ENCODE measurements at regions of chrX and their contacts with region 1.

Region 1: DNA sequence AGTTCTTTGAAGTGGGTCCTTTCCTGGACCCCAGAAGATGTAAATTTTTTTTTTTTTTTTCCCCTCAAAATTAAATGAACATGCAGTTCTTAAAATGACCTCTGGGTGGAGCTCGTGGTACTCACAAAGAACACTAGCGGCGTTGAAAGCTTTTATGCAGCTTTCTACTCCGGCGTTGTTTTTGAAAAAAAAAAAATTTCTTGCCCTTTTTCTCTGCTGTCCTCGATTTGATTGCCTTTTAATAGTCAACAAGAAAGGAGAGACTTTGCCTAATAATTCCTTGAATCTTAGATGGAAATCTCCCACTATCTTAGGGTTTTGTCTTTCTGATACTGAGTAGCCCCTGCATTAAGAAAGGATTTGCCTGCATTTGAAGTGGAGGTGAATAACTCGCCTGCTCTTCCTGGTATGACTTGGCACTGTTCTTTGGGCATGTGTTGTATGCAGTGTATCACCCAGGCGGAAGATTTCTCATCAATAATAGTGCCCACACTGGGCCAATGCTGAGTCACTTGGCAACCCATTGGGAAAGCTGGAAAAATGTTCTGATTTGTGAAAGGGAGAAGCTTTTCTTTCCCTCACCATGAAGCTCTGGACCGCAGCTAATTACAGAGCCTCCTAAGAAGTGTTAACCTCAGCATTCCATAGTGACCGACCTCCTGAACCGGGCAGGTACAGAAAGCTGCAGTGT is 104.0 kb downstream of the PHEX start:
- DNase-seq: peak; percentile 24
- ATAC-seq: peak; percentile 58
- H3K4me3 Mint-ChIP-seq: no peak overlapping the region
- H3K27ac Mint-ChIP-seq: peak overlapping the region; percentile 36
- H3K4me1 Mint-ChIP-seq: peaks cover 15% of the 10 kb centered on the region
- H3K27me3 Mint-ChIP-seq: no peaks in the 10 kb centered on the region
- CTCF ChIP-seq: peak; percentile 65

Region 2: DNA sequence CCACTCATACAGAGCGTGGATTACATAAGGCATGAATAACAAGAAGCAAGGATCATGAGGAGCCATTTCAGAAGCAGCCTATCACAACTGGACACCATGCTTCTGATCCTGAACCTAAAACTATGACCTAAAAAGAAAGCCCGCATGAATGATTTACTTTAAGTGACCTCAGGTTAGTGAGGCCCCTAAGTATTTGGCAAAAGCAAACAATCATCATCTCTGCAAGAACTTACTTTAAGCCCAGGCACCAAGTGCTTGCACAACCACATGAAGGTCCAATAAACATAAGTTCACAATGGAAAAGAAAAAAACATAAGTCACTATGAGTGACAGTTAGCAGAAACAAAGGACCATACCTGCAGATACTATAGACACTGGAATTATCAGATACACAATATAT is 304.6 kb before region 1 on chrX:
- CTCF ChIA-PET with region 1: no interaction called
- POLR2A ChIA-PET with region 1: no interaction called
- intact Hi-C with region 1: no loop called
- DNase-seq: no peak
- ATAC-seq: no peak
- H3K4me3 Mint-ChIP-seq: no peak overlapping the region
- H3K27ac Mint-ChIP-seq: no peak overlapping the region
- H3K4me1 Mint-ChIP-seq: no peaks in the 10 kb centered on the region
- H3K27me3 Mint-ChIP-seq: no peaks in the 10 kb centered on the region
- CTCF ChIP-seq: no peak

Region 3: GRCh38 chrX:21993265-21993664 is 142.9 kb before region 1 on chrX:
- CTCF ChIA-PET with region 1: no interaction called
- POLR2A ChIA-PET with region 1: no interaction called
- intact Hi-C with region 1: no loop called
- DNase-seq: no peak
- ATAC-seq: no peak
- H3K4me3 Mint-ChIP-seq: no peak overlapping the region
- H3K27ac Mint-ChIP-seq: peak overlapping the region; percentile 73
- H3K4me1 Mint-ChIP-seq: peaks cover 78% of the 10 kb centered on the region
- H3K27me3 Mint-ChIP-seq: no peaks in the 10 kb centered on the region
- CTCF ChIP-seq: no peak

Region 4: GRCh38 chrX:22147214-22147613 is 11.1 kb after region 1 on chrX:
- CTCF ChIA-PET with region 1: interaction called, 11 read pairs
- POLR2A ChIA-PET with region 1: no interaction called
- intact Hi-C with region 1: no loop called
- DNase-seq: no peak
- ATAC-seq: no peak
- H3K4me3 Mint-ChIP-seq: no peak overlapping the region
- H3K27ac Mint-ChIP-seq: no peak overlapping the region
- H3K4me1 Mint-ChIP-seq: no peaks in the 10 kb centered on the region
- H3K27me3 Mint-ChIP-seq: no peaks in the 10 kb centered on the region
- CTCF ChIP-seq: no peak

Region 5: GRCh38 chrX:22389556-22390179 is 253.5 kb after region 1 on chrX:
- CTCF ChIA-PET with region 1: no interaction called
- POLR2A ChIA-PET with region 1: no interaction called
- intact Hi-C with region 1: no loop called
- DNase-seq: no peak
- ATAC-seq: no peak
- H3K4me3 Mint-ChIP-seq: no peak overlapping the region
- H3K27ac Mint-ChIP-seq: no peak overlapping the region
- H3K4me1 Mint-ChIP-seq: no peaks in the 10 kb centered on the region
- H3K27me3 Mint-ChIP-seq: no peaks in the 10 kb centered on the region
- CTCF ChIP-seq: no peak